Heart right ventricle (tissue), 16 donors: ENCODE measurements at regions of chr11 and their contacts with region 1.

Region 1: GRCh38 chr11:69642913-69643632 is 2.1 kb downstream of the CCND1 start:
- DNase-seq: peak; percentile 77 to 88
- ATAC-seq: peak; percentile 40 to 70 (median 64)
- H3K4me3 ChIP-seq: peak overlapping the region; percentile 77 to 99 (median 84)
- H3K27ac ChIP-seq: peak overlapping the region; percentile 90 to 99 (median 95)
- H3K4me1 ChIP-seq: peaks cover 16 to 80% (median 59%) of the 10 kb centered on the region in 9 donors
- H3K27me3 ChIP-seq: peaks cover 0 to 42% (median 2%) of the 10 kb centered on the region in 7 donors
- CTCF ChIP-seq: peak; percentile 78 to 98 (median 94)

Region 2: DNA sequence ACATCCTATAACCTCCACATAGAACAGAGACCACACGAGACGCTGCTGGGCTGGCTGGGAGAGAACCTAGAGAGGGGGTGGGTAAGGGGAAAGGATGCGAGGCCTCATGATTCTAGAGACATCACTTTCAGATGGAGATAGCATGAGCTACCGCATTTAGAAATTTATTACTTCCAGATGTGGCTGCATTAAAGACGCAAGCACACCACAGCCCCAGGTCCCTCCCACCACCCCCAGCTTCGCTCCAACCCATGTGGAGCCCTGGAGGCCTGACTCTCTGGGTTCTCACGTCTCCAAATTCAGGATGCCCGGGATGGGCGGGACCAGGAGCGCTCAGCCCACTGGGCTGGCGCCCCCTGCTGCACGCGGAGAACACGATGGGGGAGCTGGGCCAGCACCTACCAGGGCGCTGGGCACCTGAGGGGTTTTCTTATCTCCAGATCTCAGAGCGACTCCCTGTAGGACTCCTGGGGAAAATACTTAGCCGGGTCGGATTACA is 753.1 kb before region 1 on chr11:
- intact Hi-C with region 1: loop called in 2 of 10 experiments (anchors 10 kb)
- DNase-seq: peak; percentile 50 to 77
- ATAC-seq: peak; percentile 61 to 80 (median 72)
- H3K4me3 ChIP-seq: peak overlapping the region in 1 of 10 donors; percentile 36
- H3K27ac ChIP-seq: peak overlapping the region; percentile 59 to 86 (median 84)
- H3K4me1 ChIP-seq: peaks cover 12 to 31% (median 20%) of the 10 kb centered on the region in 9 donors
- H3K27me3 ChIP-seq: no peaks in the 10 kb centered on the region
- CTCF ChIP-seq: peak in 8 of 9 donors; percentile 22 to 68 (median 48)

Region 3: DNA sequence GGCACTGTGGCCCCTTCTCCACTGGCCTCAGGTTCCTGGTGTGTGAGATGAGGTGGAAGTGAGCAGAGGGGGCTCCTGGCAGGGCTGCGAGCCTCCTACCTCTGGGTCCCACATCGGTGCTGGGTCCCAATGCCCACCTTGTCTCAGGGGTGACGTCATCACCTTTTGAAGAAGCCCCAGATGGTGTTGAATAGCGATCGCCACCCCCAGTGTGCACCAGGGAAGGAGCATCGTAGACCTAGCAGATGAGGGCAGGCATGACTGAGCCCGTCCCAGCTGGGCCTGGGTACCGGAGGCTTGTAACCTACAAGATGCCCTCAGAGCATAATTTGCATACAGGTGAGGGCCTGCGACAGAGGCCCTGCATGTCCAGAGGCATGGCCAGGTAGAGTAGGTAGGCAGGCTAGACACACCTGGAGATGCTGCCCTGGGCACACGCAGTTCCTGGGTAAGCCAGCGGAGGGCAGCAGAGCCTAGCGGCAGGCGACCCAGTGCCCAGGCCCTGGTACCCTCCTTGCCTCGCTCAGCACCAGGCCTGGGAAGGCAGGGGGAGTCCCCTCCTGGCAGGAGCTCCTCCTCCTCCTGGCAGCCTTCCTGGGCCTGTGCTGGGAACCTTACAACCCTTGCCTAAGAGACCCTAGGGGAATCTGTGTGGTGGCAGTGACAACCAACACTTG is 541.8 kb before region 1 on chr11:
- intact Hi-C with region 1: loop called (anchors 1 to 5 kb)
- DNase-seq: peak; percentile 64 to 78
- ATAC-seq: peak; percentile 80 to 89 (median 83)
- H3K4me3 ChIP-seq: no peak overlapping the region
- H3K27ac ChIP-seq: no peak overlapping the region
- H3K4me1 ChIP-seq: peaks cover 3 to 20% (median 15%) of the 10 kb centered on the region in 9 donors
- H3K27me3 ChIP-seq: peaks cover 0 to 5% (median 0%) of the 10 kb centered on the region in 7 donors
- CTCF ChIP-seq: peak in 8 of 9 donors; percentile 97 to 100 (median 99)

Region 4: GRCh38 chr11:69131644-69132300 is 511.3 kb before region 1 on chr11:
- intact Hi-C with region 1: loop called in 3 of 10 experiments (anchors 2 to 10 kb)
- DNase-seq: peak; percentile 58 to 76
- ATAC-seq: peak; percentile 79 to 90 (median 85)
- H3K4me3 ChIP-seq: no peak overlapping the region
- H3K27ac ChIP-seq: peak overlapping the region in 5 of 10 donors; percentile 23 to 72 (median 45)
- H3K4me1 ChIP-seq: peaks cover 5 to 26% (median 16%) of the 10 kb centered on the region in 9 donors
- H3K27me3 ChIP-seq: no peaks in the 10 kb centered on the region
- CTCF ChIP-seq: peak; percentile 65 to 95 (median 85)

Region 5: GRCh38 chr11:69443138-69443967 is 199.7 kb before region 1 on chr11:
- intact Hi-C with region 1: loop called in 8 of 10 experiments (anchors 2 to 10 kb)
- DNase-seq: peak; percentile 92 to 94
- ATAC-seq: peak; percentile 88 to 96 (median 92)
- H3K4me3 ChIP-seq: peak overlapping the region in 9 of 10 donors; percentile 7 to 56 (median 50)
- H3K27ac ChIP-seq: peak overlapping the region; percentile 77 to 99 (median 88)
- H3K4me1 ChIP-seq: peaks cover 19 to 48% (median 36%) of the 10 kb centered on the region in 9 donors
- H3K27me3 ChIP-seq: no peaks in the 10 kb centered on the region
- CTCF ChIP-seq: no peak